Tibial artery (tissue), 4 donors: ENCODE measurements at regions of chr14 and their contacts with region 1.

Region 1: GRCh38 chr14:72810201-72810600 is 83.7 kb downstream of the DPF3 start:
- DNase-seq: no peak
- H3K4me3 ChIP-seq: no peak overlapping the region
- H3K27ac ChIP-seq: peak overlapping the region; percentile 80 to 95
- H3K4me1 ChIP-seq: peaks cover 0 to 38% (median 15%) of the 10 kb centered on the region in 4 donors
- H3K27me3 ChIP-seq: no peaks in the 10 kb centered on the region
- CTCF ChIP-seq: no peak

Region 2: DNA sequence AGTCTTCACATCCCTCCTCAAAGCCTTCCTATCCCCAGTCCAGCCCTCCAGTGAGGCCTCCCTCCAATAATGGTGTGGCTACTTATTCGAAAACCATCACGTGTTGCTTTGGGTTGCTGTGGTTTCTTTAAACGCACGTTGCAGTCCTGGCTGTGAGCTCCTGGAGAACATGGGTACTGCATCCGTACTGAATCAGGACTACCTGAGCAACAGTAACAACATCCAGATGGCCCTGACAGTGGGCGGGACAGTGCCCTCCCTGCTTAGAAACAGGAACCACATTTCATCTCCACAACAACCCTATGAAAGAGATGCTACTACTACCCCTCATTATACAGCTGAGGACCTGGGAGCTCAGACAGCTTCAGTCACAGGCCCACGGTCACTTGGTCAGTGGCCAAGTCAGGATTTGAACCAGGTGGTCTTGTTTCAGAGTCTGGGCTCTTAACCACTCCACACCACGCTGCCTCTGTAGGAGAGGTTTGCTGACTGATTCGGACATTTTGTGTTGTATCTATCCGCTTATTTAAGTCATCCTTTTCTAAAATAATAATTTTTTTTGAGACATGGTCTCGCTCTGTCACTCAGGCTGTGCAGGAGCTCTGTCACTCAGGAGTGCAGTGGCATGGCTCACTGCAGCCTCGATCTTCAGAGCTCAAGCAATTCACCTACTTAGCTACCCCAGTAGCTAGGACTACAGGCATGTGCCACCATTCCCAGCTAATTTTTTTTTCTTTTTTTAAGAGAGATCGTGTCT is 21.1 kb before region 1 on chr14:
- intact Hi-C with region 1: loop called (anchors 2 kb)
- DNase-seq: no peak
- H3K4me3 ChIP-seq: no peak overlapping the region
- H3K27ac ChIP-seq: no peak overlapping the region
- H3K4me1 ChIP-seq: peaks cover 0 to 32% (median 25%) of the 10 kb centered on the region in 4 donors
- H3K27me3 ChIP-seq: no peaks in the 10 kb centered on the region
- CTCF ChIP-seq: no peak